A673 (cell line): ENCODE measurements at regions of chr22 and their contacts with region 1.

Region 1: GRCh38 chr22:40525249-40525884 is 111.2 kb downstream of the MRTFA start:
- DNase-seq: peak; percentile 66
- H3K4me3 ChIP-seq: no peak overlapping the region
- H3K27ac ChIP-seq: no peak overlapping the region
- H3K4me1 ChIP-seq: no peaks in the 10 kb centered on the region
- H3K27me3 ChIP-seq: no peaks in the 10 kb centered on the region
- CTCF ChIP-seq: peak; percentile 92

Region 2: DNA sequence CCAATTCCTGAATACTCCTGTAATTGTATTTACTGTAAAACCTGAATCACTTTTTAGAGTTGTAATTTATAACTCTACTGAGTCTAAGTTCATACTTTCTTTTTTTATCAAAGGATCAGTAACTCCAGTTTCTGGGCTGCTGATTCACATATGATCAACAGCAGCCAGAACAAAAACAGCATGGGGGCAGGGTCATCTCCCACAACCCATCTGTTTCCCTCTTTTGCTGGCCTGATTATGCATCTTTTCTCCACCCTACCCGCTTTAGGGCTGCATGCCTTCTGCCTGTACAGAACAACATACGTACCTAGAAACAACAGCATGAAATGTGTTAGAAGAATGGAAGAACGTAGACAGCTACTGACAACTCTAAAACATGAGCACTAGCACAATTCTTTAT is 35.2 kb after region 1 on chr22:
- CTCF ChIA-PET with region 1: interaction called, 11 read pairs
- POLR2A ChIA-PET with region 1: no interaction called
- intact Hi-C with region 1: no loop called
- DNase-seq: peak; percentile 12
- H3K4me3 ChIP-seq: no peak overlapping the region
- H3K27ac ChIP-seq: no peak overlapping the region
- H3K4me1 ChIP-seq: peaks cover 16% of the 10 kb centered on the region
- H3K27me3 ChIP-seq: no peaks in the 10 kb centered on the region
- CTCF ChIP-seq: no peak

Region 3: DNA sequence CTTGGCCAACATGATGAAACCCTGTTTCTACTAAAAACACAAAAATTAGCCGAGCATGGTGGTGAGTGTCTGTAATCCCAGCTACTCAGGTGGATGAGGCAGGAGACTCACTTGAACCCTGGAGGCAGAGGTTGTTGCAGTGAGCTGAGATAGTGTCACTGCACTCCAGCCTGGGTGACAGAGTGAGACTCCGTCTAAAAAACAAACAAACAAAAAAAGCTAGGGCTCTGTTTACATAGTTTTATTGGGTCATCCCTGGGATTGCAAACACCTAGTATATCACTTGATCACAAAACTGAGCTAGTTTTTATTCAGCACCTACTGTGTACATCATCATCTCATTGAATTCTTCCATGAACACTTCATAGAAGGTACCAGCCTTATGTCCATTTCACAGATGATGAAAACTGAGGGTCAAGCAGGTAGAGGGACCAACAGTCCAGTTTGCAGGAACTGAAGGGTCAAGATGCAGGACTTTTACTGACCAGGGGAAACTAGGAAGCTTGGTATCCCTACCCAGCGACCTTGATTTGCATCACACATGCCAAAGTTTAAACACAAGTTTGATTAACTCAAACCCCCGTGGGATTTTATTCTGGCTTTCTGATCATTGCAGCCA is 120.3 kb after region 1 on chr22:
- CTCF ChIA-PET with region 1: interaction called, 3 read pairs
- POLR2A ChIA-PET with region 1: interaction called, 3 read pairs
- intact Hi-C with region 1: loop called (anchors 1 kb)
- DNase-seq: no peak
- H3K4me3 ChIP-seq: no peak overlapping the region
- H3K27ac ChIP-seq: no peak overlapping the region
- H3K4me1 ChIP-seq: no peaks in the 10 kb centered on the region
- H3K27me3 ChIP-seq: no peaks in the 10 kb centered on the region
- CTCF ChIP-seq: no peak

Region 4: DNA sequence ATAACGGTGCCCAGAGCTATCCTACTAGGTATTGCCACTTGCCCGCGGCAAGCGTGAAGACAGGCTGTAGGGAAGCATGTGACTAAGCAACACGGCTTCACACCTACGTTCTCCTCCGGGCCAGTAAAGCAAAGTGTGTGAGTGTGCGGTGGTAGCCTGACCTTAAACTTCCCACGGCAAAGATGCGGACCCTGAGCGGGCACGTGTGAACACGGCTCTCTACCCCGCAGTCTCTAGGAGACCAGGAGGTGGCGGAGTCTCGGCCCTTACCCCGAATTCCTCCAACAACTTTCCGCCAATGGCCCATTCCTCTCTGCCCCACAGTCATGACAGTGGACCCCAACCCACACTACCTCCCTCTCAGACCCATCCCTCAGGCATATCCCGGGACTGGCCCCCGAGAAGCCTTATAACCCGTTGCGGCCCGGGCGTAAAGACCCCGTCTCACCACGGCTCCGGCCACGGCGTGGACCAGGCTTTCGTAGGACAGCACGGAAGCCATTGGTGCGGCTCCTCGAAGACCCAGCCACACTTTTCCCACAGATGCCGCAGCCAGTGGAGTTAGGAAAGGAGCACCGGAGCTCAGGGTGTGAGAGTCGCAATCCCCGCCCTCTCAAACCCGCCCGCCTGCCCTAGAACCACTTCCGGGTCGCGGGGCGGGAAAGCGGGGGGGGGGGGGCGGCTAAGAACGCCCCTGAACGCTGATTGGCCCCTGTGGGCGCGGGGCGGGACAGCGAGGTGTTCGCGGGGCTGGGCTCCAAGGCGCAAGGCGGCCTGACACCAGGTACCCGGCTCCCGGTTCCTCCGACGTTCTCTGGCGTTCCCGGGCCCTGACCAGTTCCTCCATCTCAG is 293.6 kb after region 1 on chr22 and contains the start of gene SLC25A17:
- CTCF ChIA-PET with region 1: no interaction called
- POLR2A ChIA-PET with region 1: interaction called, 11 read pairs
- intact Hi-C with region 1: no loop called
- DNase-seq: peak; percentile 94
- H3K4me3 ChIP-seq: peak within 1 kb of the TSS; percentile 85
- H3K27ac ChIP-seq: peak within 1 kb of the TSS; percentile 87
- H3K4me1 ChIP-seq: peaks cover 15% of the 10 kb centered on the region
- H3K27me3 ChIP-seq: no peaks in the 10 kb centered on the region
- CTCF ChIP-seq: peak; percentile 43
- total RNA-seq, gene SLC25A17: 42.7 and 51.6 TPM in 2 replicates

Region 5: DNA sequence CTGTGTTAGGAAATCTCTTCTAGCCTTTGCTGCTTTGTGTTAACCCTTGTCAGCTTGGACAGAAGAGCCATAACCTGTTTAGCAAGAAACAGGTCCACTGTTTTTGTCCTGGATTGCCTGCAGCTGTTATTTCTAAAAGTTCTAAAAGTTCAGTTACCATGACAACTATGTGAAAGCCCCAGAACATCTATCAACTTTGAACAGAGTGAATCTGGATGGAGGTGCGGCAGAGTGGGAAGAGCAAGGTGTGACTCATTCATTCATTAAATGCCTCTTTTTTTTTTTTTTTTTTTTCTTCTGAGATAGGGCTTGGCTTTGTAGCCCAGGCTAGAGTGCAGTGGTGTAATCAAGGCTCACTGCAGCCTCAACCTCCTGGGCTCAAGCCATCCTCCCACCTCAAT is 476.4 kb after region 1 on chr22:
- CTCF ChIA-PET with region 1: no interaction called
- POLR2A ChIA-PET with region 1: no interaction called
- intact Hi-C with region 1: no loop called
- DNase-seq: no peak
- H3K4me3 ChIP-seq: no peak overlapping the region
- H3K27ac ChIP-seq: no peak overlapping the region
- H3K4me1 ChIP-seq: no peaks in the 10 kb centered on the region
- H3K27me3 ChIP-seq: no peaks in the 10 kb centered on the region
- CTCF ChIP-seq: no peak